Psoas muscle (tissue), 8 donors: ENCODE measurements at regions of chr5 and their contacts with region 1.

Region 1: DNA sequence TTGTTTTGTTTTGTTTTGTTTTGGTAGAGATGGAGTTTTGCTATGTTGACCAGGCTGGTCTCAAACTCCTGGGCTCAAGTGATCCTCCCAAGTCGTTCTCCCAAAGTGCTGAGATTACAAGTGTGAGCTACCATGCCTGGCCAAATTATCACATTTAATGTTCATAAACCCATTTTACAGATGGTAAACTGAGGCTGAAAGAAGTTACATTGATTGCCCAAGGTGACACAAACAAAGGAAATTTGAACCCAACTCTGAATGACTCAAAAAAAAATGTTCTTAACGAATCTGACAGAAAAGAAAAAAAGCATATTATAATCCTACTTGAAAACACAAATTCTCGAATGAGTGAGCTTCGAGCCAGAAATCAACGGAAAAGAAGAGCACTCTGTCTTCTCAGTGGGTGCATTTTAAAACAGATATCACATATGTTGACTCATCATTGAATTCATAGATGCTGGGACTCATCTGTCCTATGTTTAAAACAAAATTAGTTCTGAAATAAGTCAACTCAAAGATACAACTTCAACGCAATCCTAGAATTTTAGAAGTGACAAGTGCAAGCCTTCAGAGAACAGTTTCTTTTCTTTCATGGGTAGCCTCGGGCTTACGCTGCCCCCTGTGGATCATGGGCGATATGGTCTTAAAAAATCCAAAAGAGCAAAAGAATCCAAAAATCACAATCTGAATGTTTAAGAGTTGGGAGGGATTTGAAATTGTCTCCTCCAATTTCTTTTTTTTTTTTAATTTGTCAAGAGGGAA is 28.4 kb downstream of the TIMD4 start:
- DNase-seq: no peak
- ATAC-seq: no peak
- H3K4me3 ChIP-seq: no peak overlapping the region
- H3K27ac ChIP-seq: no peak overlapping the region
- H3K4me1 ChIP-seq: no peaks in the 10 kb centered on the region
- H3K27me3 ChIP-seq: no peaks in the 10 kb centered on the region
- CTCF ChIP-seq: peak; percentile 44

Region 2: DNA sequence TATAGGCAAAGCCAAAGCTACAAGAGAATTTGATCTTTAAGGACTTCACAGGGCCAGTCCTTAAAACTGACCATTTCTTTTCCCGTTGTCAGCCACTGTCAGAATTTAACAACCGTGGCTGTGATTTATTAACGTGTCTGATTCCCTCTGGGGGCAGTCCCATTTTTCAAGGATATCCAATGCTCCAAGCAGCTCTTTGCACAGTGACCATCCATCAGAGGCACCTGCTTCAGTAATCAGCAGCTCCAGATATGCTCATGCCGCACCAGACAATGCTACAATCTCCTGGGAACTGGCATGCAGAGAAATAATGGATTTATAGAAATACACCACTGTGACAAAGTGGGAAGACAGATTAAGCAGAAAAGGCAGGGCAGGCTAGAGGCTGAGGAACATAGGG is 247.8 kb before region 1 on chr5:
- intact Hi-C with region 1: loop called in 1 of 2 experiments (anchors 10 kb)
- DNase-seq: no peak
- ATAC-seq: peak in 3 of 4 donors; percentile 50 to 80 (median 63)
- H3K4me3 ChIP-seq: no peak overlapping the region
- H3K27ac ChIP-seq: no peak overlapping the region
- H3K4me1 ChIP-seq: peaks cover 22% of the 10 kb centered on the region
- H3K27me3 ChIP-seq: no peaks in the 10 kb centered on the region
- CTCF ChIP-seq: no peak